Body of pancreas (tissue), 4 donors: ENCODE measurements at regions of chr2 and their contacts with region 1.

Region 1: GRCh38 chr2:112433932-112434730 is 686 bp upstream of the RGPD8 start:
- DNase-seq: peak in 1 of 4 donors; percentile 15
- ATAC-seq: no peak
- H3K4me3 ChIP-seq: no peak overlapping the region
- H3K27ac ChIP-seq: no peak overlapping the region
- H3K4me1 ChIP-seq: peaks cover 11% of the 10 kb centered on the region
- H3K27me3 ChIP-seq: no peaks in the 10 kb centered on the region
- CTCF ChIP-seq: no peak
- POLR2A ChIP-seq: no peak

Region 2: DNA sequence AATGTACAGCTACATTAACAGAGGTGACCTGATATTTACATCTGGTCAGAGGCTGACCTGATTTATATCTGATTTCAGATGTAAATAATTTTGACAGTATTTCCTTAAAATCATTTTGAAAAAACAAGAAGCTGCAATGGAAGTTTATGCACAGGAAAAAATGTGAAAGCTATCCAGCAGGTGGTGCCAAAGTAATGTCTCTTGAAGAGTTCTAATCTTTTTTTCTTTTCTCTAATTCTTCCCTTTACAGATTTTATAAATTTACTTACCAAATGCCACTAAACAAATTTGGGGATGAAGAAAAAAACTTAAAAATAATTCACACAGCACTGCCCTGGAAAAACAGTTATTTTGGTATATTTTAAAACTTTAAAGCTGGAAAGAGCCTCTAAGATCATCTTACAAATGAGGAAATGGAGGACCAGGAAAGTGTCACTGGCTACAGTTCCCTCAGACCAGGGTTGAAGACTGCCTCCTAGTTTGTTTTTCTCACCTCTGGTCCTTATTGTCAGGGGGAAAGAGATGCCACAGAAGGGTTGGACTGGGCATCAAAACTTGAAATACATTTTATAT is 312.4 kb before region 1 on chr2:
- intact Hi-C with region 1: no loop called
- DNase-seq: peak; percentile 27 to 59 (median 44)
- ATAC-seq: no peak
- H3K4me3 ChIP-seq: no peak overlapping the region
- H3K27ac ChIP-seq: no peak overlapping the region
- H3K4me1 ChIP-seq: no peaks in the 10 kb centered on the region
- H3K27me3 ChIP-seq: no peaks in the 10 kb centered on the region
- CTCF ChIP-seq: peak; percentile 32 to 64 (median 55)
- POLR2A ChIP-seq: no peak

Region 3: DNA sequence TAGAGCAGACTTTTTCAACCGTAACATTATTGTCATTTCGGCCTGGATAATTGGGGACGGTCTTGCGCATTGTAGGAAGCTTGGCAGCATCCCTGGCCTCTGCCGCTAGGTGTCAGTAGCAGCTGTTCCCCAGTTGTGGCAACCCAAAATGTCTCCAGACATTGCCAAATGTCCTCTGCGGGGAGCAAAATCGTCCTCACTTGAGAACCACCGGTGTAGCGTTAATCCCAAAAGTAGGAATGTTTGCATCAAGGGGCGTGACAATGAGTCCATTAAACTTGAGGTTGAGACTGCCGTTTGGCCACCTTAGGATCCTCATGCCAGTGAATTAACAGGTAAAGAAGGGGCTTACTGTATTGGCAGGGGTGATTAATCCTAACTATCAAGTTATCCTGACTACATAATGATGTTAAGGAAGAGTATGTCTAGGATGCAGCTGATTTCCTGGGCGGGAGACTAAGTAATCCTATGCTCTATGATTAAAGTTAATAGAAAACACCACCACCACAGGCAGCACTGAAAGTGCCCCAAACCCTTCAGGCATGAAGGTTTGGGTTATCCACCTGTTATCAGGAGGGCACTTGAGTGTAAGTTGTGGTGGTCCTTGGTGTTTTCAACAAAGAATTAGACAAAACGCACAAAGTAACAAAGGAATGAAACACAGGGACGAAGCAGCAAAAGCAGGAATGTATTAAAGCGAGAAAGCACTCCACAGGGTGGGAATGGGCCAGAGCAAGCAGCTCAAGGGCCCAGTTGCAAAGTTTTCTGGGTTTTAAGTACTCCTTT is 174.4 kb before region 1 on chr2:
- intact Hi-C with region 1: loop called (anchors 5 kb)
- DNase-seq: peak; percentile 84 to 88 (median 86)
- ATAC-seq: peak; percentile 67
- H3K4me3 ChIP-seq: no peak overlapping the region
- H3K27ac ChIP-seq: no peak overlapping the region
- H3K4me1 ChIP-seq: peaks cover 7% of the 10 kb centered on the region
- H3K27me3 ChIP-seq: no peaks in the 10 kb centered on the region
- CTCF ChIP-seq: peak; percentile 85 to 96 (median 94)
- POLR2A ChIP-seq: no peak

Region 4: DNA sequence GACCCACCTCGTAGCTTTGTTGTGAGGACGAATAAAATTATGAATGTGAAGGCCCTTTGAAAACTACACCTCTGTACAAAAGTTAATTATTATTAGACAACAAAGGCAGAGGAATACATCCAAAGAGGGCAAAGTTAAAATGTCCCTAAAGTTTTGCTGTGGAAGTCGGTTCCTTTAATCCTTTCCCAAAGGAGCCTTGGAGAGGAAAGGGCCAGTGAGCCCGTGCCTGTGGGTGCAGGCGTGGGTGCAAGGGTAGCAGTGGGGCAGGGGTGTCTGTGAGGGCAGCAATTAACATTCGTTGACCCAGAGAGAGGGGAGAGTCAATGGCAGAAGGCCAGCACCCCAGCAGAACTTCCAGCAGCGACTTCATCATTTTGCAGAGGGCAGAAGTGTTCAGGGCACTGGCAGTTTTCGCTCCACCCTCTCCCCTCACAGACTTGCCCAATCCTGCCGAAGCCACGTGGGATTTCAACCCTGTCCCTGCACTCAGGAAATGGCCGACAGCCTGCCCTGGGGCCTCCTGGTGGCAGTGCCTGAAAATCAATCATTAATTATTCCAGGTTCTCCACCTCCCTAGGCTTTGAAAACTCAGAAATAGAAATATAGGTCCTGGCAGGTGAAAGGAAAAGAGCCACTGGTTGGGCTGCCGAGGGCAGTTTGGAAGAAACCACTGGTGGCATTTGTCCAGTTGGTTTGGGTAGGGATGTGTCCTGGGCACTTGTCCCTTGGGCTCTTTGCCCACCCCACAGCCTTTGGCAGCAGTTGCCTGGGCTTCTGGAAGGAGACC is 848.8 kb after region 1 on chr2:
- intact Hi-C with region 1: no loop called
- DNase-seq: peak; percentile 77 to 89 (median 84)
- ATAC-seq: peak; percentile 78
- H3K4me3 ChIP-seq: no peak overlapping the region
- H3K27ac ChIP-seq: peak overlapping the region; percentile 78 to 95 (median 92)
- H3K4me1 ChIP-seq: peaks cover 47% of the 10 kb centered on the region
- H3K27me3 ChIP-seq: no peaks in the 10 kb centered on the region
- CTCF ChIP-seq: peak in 5 of 7 experiments; percentile 23 to 65 (median 59)
- POLR2A ChIP-seq: peak in 2 of 3 donors; percentile 41 to 55